ENCODE measurements at regions of chr19 and their contacts with region 1.

Region 1: DNA sequence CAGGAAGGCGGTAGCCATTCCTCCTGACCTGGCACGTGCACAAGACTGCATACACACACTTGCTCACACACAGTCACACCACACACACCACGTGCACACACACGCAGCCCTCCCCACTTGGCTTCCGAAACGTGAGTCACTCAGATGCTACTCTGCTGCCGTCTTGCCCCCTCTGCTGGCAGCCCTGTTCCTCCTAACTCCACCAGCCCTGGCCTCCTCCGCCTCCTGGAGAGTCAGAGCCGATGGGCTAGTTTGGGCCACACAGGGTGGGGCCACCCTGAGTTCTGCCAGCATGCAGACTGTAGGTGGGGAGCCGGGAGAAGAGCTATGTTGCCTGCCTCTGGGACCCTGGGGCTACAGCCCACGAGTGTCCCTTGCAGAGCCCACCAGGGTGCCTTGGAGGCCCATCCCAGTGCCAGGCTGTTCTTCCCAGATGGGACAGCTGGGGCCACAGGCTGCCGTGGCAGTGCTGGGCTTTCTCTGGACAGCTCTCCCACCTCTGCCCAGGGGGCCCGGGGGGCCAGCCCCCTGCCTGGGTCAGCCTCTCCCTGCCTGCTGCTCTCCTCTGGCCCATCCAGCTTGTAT is 12.1 kb downstream of the PIN1 start:
- DNase-seq: peak; percentile 23 to 43 (median 39)
- H3K4me3 ChIP-seq: no peak overlapping the region
- H3K27ac ChIP-seq: no peak overlapping the region
- H3K4me1 ChIP-seq: no peaks in the 10 kb centered on the region
- H3K27me3 ChIP-seq: no peaks in the 10 kb centered on the region

Region 2: DNA sequence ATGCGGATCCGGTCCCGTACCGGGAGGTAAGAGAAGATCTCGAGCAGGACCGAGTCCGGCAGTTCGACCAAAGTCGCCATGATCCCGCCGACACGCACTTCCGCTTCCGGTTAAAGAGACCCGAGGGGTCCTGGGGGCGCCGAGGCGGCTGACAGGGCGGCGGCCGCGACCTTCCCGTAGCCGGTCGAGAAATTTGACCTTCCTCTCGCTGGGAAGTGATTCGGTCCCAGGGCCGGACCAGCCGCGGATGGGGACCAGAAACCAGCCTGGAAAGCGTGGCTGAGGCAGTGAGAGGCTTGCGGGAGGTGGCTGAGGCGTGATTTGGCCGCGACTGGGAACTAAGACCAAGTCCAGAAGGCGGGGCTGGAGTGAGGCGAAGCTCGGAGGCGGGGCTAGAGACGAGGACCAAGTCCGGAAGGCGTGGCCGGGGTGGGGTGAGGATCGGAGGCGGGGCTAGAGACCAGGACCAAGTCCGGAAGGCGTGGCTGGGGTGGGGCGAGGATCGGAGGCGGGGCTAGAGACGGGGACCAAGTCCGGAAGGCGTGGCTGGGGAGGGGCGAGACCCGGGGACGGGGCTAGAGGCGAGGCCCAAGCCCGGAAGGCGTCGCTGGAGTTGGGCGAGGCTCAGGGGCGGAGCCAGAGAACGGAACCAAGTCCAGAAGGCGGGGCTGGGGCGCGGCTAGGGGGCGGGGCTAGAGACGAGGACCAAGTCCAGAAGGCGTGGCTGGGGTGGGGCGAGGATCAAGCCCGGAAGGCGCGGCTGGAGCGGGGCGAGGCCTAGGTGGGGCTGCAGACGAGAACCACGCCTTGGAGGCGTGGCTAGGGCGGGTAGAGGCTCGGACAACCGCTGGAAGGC is 28.2 kb before region 1 on chr19 and contains the start of gene FBXL12:
- CTCF ChIA-PET with region 1: no interaction called
- POLR2A ChIA-PET with region 1: no interaction called
- DNase-seq: peak; percentile 99 to 100 (median 99)
- H3K4me3 ChIP-seq: peak within 1 kb of the TSS; percentile 90 to 99 (median 95)
- H3K27ac ChIP-seq: peak within 1 kb of the TSS; percentile 75 to 89
- H3K4me1 ChIP-seq: peaks cover 0 to 20% (median 14%) of the 10 kb centered on the region in 4 experiments
- H3K27me3 ChIP-seq: no peaks in the 10 kb centered on the region

Region 3: DNA sequence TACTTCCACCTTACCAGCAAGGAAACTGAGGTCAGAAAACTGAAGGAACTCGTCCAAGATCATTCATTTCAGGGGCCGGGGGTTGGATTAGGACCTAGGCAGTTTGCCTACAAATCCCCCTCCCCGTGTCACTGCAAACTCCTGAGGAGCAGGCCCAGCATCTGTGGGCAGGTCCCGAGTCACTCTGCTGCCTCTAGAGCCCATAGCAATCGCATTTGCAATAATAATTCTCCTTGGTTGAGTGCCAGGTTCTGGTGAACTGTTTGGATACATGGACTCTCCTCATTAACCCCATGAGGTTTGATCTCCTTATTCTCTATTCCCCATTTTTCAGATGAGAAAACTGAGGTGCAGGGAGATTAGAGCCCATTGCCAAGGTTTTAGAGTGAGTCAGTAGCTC is 11.2 kb before region 1 on chr19:
- CTCF ChIA-PET with region 1: interaction called, 11 read pairs
- POLR2A ChIA-PET with region 1: no interaction called
- DNase-seq: peak in 2 of 3 donors; percentile 35 to 44
- H3K4me3 ChIP-seq: peak overlapping the region; percentile 67 to 99 (median 80)
- H3K27ac ChIP-seq: peak overlapping the region in 1 of 2 experiments; percentile 77
- H3K4me1 ChIP-seq: peaks cover 5 to 14% (median 12%) of the 10 kb centered on the region in 4 experiments
- H3K27me3 ChIP-seq: no peaks in the 10 kb centered on the region

Region 4: GRCh38 chr19:9958379-9958821 is 111.2 kb after region 1 on chr19:
- CTCF ChIA-PET with region 1: no interaction called
- POLR2A ChIA-PET with region 1: no interaction called
- DNase-seq: no peak
- H3K4me3 ChIP-seq: no peak overlapping the region
- H3K27ac ChIP-seq: no peak overlapping the region
- H3K4me1 ChIP-seq: no peaks in the 10 kb centered on the region
- H3K27me3 ChIP-seq: peaks cover 0 to 33% (median 2%) of the 10 kb centered on the region in 5 experiments